SK-N-SH (cell line): ENCODE measurements at regions of chr3 and their contacts with region 1.

Region 1: DNA sequence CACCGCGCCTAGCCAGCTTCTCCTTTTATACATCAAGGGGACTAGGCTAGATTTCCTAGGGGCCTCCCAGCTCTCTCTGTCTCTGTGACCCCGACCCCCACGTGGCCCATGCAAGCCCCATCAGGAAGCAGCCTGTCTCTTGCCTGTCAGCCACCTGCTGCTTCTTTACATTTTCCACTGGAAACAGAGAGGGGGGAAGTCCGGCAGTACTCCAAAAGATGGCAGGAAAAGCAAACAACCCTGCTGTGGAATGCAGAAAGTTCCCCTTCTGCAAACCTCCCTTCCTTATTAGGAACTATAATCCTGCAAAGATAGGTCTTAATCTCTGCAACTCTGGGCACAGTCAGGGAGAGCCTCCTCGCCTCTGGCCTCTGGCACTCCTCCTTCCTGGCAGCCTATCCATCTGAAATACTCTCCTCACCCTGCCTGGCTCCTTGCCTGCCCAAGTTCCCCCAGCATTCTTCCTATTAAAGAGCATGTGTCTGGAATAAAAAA is 47.4 kb upstream of the HACD2 start:
- DNase-seq: no peak
- H3K4me3 ChIP-seq: no peak overlapping the region
- H3K27ac ChIP-seq: no peak overlapping the region
- H3K4me1 ChIP-seq: no peaks in the 10 kb centered on the region; a peak in 1 of 4 replicates
- H3K27me3 ChIP-seq: no peaks in the 10 kb centered on the region
- CTCF ChIP-seq: no peak
- EP300 ChIP-seq: no peak
- RAD21 ChIP-seq: no peak

Region 2: GRCh38 chr3:123642182-123642956 is 10.2 kb after region 1 on chr3:
- CTCF ChIA-PET with region 1: interaction called, 15 read pairs
- POLR2A ChIA-PET with region 1: no interaction called
- DNase-seq: peak; percentile 65
- H3K4me3 ChIP-seq: no peak overlapping the region; a peak in 1 of 4 replicates
- H3K27ac ChIP-seq: peak overlapping the region in 1 of 2 experiments; percentile 19; a peak in 2 of 4 replicates
- H3K4me1 ChIP-seq: peaks cover 0 to 7% of the 10 kb centered on the region in 2 experiments; a peak in 1 of 4 replicates
- H3K27me3 ChIP-seq: no peaks in the 10 kb centered on the region
- CTCF ChIP-seq: peak; percentile 97
- EP300 ChIP-seq: no peak
- RAD21 ChIP-seq: peak; percentile 65